ENCODE measurements at regions of chr2 and their contacts with region 1.

Region 1: DNA sequence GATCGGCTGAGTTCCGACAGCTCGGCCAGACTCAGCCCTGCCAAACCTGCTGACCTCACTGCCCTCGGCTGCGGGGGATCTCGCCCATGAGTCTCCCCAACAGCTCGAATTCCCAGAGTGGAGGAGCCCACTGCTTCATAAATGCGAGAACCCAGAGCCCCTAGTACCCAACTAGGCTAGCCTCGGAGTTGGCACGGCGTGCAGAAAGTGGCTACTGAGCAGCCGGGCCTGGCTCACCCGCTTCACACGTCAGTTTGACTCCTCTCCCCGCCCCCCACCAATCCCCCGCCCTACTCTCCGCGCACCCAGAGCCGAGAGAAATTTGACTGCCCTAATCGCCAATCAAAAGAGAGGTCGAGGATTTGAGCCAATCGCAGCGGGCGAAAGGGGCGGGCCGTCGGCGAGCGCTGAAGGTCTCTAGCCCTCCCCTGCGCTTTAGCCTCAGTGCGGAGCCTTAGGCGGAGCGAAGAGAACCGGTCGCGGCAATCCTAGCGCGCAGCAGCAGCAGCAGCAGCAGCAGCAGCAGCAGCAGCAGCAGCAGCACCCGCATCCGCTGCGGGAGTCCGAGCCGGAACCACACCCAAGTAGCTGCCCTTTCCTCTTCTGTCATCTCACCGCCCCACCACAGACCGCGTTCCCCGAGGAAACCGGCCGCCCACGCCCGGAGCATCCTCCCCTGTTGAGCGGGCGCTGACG is at the start of gene GLS:
- DNase-seq: peak; percentile 98
- ATAC-seq: peak; percentile 81
- H3K4me3 Mint-ChIP-seq: peak within 1 kb of the TSS; percentile 79
- H3K27ac Mint-ChIP-seq: peak within 1 kb of the TSS; percentile 98
- H3K4me1 Mint-ChIP-seq: peaks cover 41% of the 10 kb centered on the region
- H3K27me3 Mint-ChIP-seq: no peaks in the 10 kb centered on the region
- total RNA-seq, gene GLS: 136 to 242 TPM

Region 2: DNA sequence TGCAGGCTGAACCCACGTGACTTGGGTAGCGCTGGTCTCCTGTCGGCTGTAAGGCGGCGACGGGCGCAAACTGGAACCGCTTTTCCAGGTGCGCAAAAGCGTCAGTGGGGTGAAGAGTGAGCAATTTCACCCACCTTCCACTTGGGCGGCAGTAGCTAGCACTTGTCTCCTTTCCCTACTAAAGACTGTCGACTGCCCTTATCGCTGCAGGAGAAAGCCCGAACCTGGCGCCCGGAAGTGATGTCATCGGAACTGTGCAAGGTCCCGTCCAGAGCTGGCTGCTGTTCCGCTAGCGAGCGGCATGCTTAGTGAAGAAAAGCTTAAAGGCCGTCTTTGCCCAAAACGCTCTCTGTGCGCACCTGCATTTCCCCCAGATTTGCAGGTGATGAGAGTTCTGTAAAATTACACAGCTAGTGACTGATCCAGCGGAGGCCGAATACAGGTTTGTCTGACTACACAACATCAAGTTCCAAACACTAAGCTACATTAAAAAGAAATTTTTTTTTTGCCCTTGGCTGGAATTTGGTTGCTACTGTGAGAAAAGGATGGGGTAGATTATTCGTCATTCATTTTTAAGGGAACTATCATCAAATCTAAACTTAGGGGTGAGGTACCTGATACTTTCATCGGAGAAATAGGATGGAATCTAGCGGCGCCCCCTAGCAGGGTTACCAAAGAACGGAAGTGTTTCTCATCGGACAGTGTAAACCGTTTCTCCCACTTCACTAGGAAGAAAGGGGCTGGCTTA is 1117.8 kb before region 1 on chr2 and contains the start of gene OSGEPL1:
- CTCF ChIA-PET with region 1: no interaction called
- POLR2A ChIA-PET with region 1: no interaction called
- intact Hi-C with region 1: loop called in 1 of 2 experiments (anchors 5 kb)
- DNase-seq: peak; percentile 96
- ATAC-seq: peak; percentile 97
- H3K4me3 Mint-ChIP-seq: peak within 1 kb of the TSS; percentile 89
- H3K27ac Mint-ChIP-seq: peak within 1 kb of the TSS; percentile 96
- H3K4me1 Mint-ChIP-seq: peaks cover 15% of the 10 kb centered on the region
- H3K27me3 Mint-ChIP-seq: no peaks in the 10 kb centered on the region
- total RNA-seq, gene OSGEPL1: 9.8 to 11.6 TPM

Region 3: DNA sequence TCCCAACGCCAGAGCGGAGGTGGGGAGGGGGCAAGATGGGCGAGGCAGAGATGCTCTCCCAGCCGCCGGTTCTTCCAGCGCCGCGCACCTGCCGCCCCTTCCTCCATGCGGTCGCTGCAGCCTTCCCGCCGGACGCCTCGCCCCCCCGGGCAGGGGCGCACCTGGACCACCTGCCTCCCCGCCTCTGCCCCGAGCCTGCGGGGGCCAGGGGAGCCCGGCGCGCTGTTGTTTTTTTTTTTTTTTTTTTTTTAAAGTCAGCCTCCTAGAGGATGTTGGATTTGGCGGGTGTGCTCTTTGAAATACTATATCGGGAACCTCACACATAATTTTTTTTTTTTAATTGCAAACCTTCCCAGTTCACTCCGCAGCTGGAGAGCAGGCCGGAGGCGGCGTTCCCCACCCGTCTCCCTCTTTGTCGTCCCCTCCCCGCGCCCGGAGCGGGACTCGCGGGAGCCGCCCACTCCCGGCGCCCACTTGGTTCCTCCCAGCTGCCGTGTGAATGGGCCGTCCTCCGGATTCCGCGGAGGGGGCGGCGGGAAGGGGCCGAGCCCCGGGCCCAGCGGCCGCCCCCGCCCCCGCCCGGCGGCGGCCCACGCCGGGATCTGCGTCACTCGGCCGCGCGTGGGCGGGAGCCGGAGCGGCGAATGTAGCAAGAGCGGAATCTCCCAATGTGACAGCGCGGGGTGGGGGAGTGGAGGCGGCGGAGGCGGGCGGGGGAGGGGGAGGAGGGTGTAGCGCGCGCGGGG is 232.1 kb before region 1 on chr2:
- CTCF ChIA-PET with region 1: no interaction called
- POLR2A ChIA-PET with region 1: interaction called, 3 read pairs
- intact Hi-C with region 1: loop called in 1 of 2 experiments (anchors 2 kb)
- DNase-seq: peak; percentile 88
- ATAC-seq: peak; percentile 54
- H3K4me3 Mint-ChIP-seq: peak overlapping the region; percentile 67
- H3K27ac Mint-ChIP-seq: peak overlapping the region; percentile 81
- H3K4me1 Mint-ChIP-seq: peaks cover 46% of the 10 kb centered on the region
- H3K27me3 Mint-ChIP-seq: no peaks in the 10 kb centered on the region

Region 4: GRCh38 chr2:190843874-190844699 is 36.4 kb before region 1 on chr2:
- CTCF ChIA-PET with region 1: interaction called, 6 read pairs
- POLR2A ChIA-PET with region 1: interaction called, 9 read pairs
- intact Hi-C with region 1: loop called (anchors 1 kb)
- DNase-seq: peak; percentile 74
- ATAC-seq: peak; percentile 87
- H3K4me3 Mint-ChIP-seq: peak overlapping the region; percentile 43
- H3K27ac Mint-ChIP-seq: peak overlapping the region; percentile 82
- H3K4me1 Mint-ChIP-seq: peaks cover 45% of the 10 kb centered on the region
- H3K27me3 Mint-ChIP-seq: no peaks in the 10 kb centered on the region

Region 5: DNA sequence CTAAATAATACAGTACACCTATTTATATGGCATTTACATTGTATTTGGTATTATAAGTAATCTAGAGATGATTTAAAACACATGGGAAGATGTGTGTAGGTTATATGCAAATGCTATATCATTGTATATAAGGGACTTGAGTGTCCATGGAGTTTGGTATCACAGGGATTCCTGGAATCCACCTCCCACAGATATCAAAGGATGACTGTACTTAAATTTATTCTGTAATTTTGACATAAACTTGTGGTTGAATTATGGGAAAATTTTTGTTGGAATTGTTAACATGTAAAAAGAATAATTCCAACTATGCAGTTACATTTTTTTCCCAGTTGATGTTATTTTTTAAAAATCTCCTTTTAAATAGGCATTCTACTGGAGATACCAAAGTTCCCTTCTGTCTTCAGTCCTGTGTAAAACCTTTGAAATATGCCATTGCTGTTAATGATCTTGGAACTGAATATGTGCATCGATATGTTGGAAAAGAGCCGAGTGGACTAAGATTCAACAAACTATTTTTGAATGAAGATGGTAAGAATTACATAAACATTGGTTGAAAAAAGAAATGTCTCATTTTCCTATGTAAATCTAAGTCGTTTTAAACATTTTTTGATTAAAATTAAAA is 24.2 kb after region 1 on chr2:
- CTCF ChIA-PET with region 1: interaction called, 4 read pairs
- POLR2A ChIA-PET with region 1: interaction called, 10 read pairs
- intact Hi-C with region 1: loop called in 1 of 2 experiments (anchors 2 kb)
- DNase-seq: no peak
- ATAC-seq: no peak
- H3K4me3 Mint-ChIP-seq: no peak overlapping the region
- H3K27ac Mint-ChIP-seq: no peak overlapping the region
- H3K4me1 Mint-ChIP-seq: peaks cover 33% of the 10 kb centered on the region
- H3K27me3 Mint-ChIP-seq: no peaks in the 10 kb centered on the region

Region 6: DNA sequence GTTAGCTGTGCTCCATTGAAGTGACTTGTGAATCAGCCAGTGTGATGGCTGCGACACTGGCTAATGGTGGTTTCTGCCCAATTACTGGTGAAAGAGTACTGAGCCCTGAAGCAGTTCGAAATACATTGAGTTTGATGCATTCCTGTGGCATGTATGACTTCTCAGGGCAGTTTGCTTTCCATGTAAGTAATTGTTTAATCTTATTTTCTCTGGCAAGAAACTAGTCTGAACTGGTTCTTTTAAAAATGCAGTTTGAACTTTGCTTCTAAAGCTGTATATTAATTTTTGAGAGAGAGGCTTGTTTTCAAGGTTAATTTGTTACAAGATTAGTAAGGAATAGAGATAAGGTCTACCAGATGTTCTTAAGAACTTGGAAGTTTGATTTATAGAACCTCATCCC is 46.8 kb after region 1 on chr2:
- CTCF ChIA-PET with region 1: no interaction called
- POLR2A ChIA-PET with region 1: no interaction called
- intact Hi-C with region 1: no loop called
- DNase-seq: no peak
- ATAC-seq: no peak
- H3K4me3 Mint-ChIP-seq: no peak overlapping the region
- H3K27ac Mint-ChIP-seq: no peak overlapping the region
- H3K4me1 Mint-ChIP-seq: peaks cover 15% of the 10 kb centered on the region
- H3K27me3 Mint-ChIP-seq: no peaks in the 10 kb centered on the region

Region 7: GRCh38 chr2:191020221-191020741 is 139.8 kb after region 1 on chr2:
- CTCF ChIA-PET with region 1: no interaction called
- POLR2A ChIA-PET with region 1: interaction called, 6 read pairs
- intact Hi-C with region 1: loop called (anchors 1 to 2 kb)
- DNase-seq: peak; percentile 96
- ATAC-seq: peak; percentile 62
- H3K4me3 Mint-ChIP-seq: no peak overlapping the region
- H3K27ac Mint-ChIP-seq: no peak overlapping the region
- H3K4me1 Mint-ChIP-seq: peaks cover 37% of the 10 kb centered on the region
- H3K27me3 Mint-ChIP-seq: no peaks in the 10 kb centered on the region